Esophagus muscularis mucosa (tissue), 4 donors: ENCODE measurements at regions of chr10 and their contacts with region 1.

Region 1: GRCh38 chr10:101818119-101818871 is at the start of gene OGA:
- DNase-seq: peak; percentile 99
- H3K4me3 ChIP-seq: peak within 1 kb of the TSS; percentile 73 to 99 (median 94)
- H3K27ac ChIP-seq: peak within 1 kb of the TSS; percentile 88 to 98 (median 96)
- H3K4me1 ChIP-seq: peaks cover 31 to 46% (median 41%) of the 10 kb centered on the region in 4 donors
- H3K27me3 ChIP-seq: no peaks in the 10 kb centered on the region
- CTCF ChIP-seq: peak in 1 of 3 experiments; percentile 32
- EP300 ChIP-seq: no peak
- POLR2A ChIP-seq: peak; percentile 99
- total RNA-seq, gene OGA: 85.4 to 131 (median 101) TPM

Region 2: DNA sequence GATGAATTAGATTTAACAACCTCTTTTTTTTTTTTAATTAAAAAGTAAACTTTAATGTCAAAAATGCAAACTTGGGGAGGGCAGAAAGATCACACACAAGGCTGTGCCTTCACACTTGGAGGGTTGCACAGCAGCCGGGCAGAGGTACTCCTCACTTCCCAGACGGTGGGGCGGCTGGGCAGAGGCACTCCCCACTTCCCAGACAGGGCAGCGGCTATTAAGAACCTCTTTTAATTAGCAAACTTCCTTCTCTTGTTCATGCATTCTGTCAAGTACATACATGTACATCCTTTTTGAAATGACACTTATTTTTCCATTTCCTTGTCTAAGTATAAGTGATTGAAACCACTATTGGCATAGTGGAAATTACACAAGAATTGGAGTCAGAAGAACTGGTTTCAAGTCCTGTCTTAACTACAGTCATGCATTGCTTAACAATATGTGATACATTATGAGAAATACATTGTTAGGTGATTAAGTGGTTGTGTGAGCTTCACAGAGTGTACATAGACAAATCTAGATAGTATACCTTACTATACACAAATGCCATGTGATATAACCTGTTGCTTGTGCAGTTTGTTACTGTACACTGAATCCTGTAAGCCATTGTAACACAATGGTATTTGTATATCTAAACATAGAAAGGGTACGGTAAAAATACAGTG is 437.8 kb before region 1 on chr10:
- intact Hi-C with region 1: no loop called
- DNase-seq: no peak
- H3K4me3 ChIP-seq: no peak overlapping the region
- H3K27ac ChIP-seq: no peak overlapping the region
- H3K4me1 ChIP-seq: peaks cover under 1 to 22% (median 18%) of the 10 kb centered on the region in 4 donors
- H3K27me3 ChIP-seq: no peaks in the 10 kb centered on the region
- CTCF ChIP-seq: no peak
- EP300 ChIP-seq: no peak
- POLR2A ChIP-seq: no peak

Region 3: DNA sequence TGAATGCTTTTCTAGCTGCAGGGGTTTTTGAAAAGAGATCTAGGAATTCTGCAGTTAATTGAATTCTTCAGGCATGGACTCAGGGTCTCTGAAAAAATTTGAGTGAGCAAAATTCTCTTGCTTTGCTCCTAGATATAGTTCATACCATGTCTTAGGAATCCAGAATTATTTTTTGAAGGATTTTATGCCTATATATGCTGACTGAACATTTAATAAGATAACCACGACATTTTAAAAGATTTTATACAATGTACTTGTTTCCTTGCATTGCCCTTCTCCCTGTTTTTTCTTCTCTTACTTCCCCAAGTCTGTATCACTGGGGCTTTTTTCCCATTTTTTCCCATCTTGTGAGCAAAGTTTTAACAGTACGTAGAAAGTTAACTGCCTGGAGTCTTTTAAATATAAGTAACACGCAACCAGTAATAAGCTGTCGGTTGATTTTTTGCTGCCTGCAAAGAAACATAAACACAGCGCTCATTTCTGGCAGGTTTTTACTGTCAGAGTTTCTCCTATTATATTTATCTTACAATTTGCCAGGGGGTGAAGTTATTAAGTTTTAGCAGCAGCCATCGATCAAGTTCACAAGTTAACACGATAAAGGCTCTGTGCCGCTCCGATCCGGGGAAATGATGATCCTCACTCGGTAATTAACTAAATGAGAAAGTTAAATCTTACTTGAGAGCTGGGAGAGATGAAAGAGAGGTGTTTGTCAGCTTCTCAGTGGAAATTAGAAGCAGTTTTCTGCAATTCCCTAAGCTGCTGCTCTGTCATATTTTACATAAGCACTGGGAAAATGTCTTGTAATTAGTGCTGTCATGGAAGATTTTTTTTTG is 311.2 kb before region 1 on chr10:
- intact Hi-C with region 1: no loop called
- DNase-seq: no peak
- H3K4me3 ChIP-seq: peak overlapping the region in 1 of 4 donors; percentile 0
- H3K27ac ChIP-seq: no peak overlapping the region
- H3K4me1 ChIP-seq: peaks cover 0 to 16% (median 14%) of the 10 kb centered on the region in 4 donors
- H3K27me3 ChIP-seq: no peaks in the 10 kb centered on the region
- CTCF ChIP-seq: no peak
- EP300 ChIP-seq: no peak
- POLR2A ChIP-seq: no peak

Region 4: DNA sequence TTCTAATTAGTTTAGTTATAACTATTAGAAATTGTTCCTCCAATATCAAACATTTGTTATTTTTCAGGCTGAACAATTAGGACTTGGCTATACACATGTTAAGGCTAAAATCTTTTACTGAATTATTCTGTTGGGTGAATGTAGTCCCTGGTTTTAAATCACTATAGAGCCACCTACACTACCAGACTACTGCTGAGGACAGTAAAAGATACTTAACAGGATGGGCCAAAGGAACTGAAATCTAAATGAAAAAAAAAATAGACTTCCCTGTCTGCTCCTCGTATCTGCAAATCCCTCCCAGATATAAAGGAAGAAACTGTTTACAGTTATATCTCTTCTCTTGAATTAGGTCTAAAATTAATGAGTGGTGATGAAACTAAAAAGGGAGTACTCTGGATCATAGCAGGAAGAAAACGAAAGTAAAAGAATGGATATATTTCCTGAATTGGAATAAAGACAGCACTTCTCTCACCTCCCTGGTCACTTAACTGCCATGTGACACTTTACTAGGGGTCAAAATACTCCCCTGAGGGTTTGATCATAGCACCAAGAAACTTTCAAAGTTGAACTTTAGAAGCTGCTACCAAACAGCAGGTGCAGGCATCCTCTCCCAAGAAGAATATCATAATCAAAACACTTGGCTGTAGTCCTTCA is 136.0 kb before region 1 on chr10:
- intact Hi-C with region 1: no loop called
- DNase-seq: no peak
- H3K4me3 ChIP-seq: peak overlapping the region; percentile 0 to 35 (median 28)
- H3K27ac ChIP-seq: peak overlapping the region; percentile 1 to 36 (median 26)
- H3K4me1 ChIP-seq: peaks cover 9 to 40% (median 35%) of the 10 kb centered on the region in 4 donors
- H3K27me3 ChIP-seq: no peaks in the 10 kb centered on the region
- CTCF ChIP-seq: no peak
- EP300 ChIP-seq: no peak
- POLR2A ChIP-seq: no peak

Region 5: GRCh38 chr10:102151774-102152544 is 333.7 kb after region 1 on chr10 and contains the start of gene NOLC1:
- intact Hi-C with region 1: loop called (anchors 5 kb)
- DNase-seq: peak; percentile 100
- H3K4me3 ChIP-seq: peak within 1 kb of the TSS; percentile 73 to 89 (median 86)
- H3K27ac ChIP-seq: peak within 1 kb of the TSS; percentile 83 to 98 (median 90)
- H3K4me1 ChIP-seq: peaks cover 24 to 34% (median 28%) of the 10 kb centered on the region in 4 donors
- H3K27me3 ChIP-seq: no peaks in the 10 kb centered on the region
- CTCF ChIP-seq: peak in 1 of 3 experiments; percentile 18
- EP300 ChIP-seq: peak; percentile 92
- POLR2A ChIP-seq: peak; percentile 60
- total RNA-seq, gene NOLC1: 28.7 to 83.8 (median 48.5) TPM